B cell (primary cell): ENCODE measurements at regions of chr6 and their contacts with region 1.

Region 1: DNA sequence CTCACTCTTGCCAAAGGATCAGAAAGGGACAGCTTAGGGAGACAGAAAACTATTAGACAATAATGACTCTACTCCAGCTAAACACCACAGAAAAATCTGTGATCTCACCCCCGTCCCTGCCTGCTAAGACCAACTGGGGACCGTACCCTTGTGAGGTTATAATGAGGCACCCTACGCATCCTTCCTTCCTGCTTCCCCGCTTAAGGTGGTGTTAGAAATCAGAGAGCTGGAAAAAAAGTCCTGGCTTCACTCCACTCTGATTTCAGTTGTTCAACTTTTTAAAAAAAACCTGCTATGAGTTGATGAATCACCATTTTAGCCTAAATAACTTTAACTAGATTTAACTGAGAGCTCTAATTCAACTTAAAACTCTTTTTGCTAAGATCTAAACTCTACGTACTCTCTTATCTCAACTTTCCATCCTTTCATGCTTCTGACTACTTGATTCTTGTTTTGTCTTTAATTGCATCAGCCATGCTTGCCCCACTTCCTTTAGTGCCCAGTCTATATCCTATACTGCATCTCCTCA is 35.8 kb upstream of the TMEM14A start:
- DNase-seq: no peak
- ATAC-seq: no peak
- H3K4me3 ChIP-seq: no peak overlapping the region
- H3K4me3 Mint-ChIP-seq: no peak overlapping the region
- H3K27ac ChIP-seq: no peak overlapping the region
- H3K27ac Mint-ChIP-seq: no peak overlapping the region
- H3K4me1 ChIP-seq: no peaks in the 10 kb centered on the region
- H3K4me1 Mint-ChIP-seq: no peaks in the 10 kb centered on the region
- H3K27me3 ChIP-seq: peaks cover 0 to 6% (median 0%) of the 10 kb centered on the region in 4 experiments
- H3K27me3 Mint-ChIP-seq: peaks cover 25% of the 10 kb centered on the region
- CTCF ChIP-seq: no peak

Region 2: DNA sequence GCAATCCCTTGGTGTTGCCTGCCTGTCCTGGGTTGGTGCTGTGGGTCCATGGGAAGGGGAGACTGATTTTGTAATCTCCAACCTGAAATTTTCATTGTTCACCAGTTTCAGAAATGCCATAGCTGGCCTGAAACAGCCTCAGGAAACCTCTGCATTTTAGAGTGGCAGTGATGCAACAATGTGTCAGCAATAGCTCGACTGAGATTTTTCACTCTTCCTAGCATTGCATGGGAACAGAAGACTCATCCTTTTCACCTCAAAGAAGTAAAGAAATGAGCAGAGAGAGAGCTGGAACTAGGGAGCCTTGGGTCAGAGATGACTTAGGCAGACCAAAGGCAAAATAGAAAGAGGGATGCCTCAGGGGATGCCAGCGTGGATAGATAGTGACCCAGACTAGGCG is 12.1 kb after region 1 on chr6:
- CTCF ChIA-PET with region 1: interaction called, 19 read pairs
- POLR2A ChIA-PET with region 1: no interaction called
- intact Hi-C with region 1: no loop called
- DNase-seq: no peak
- ATAC-seq: no peak
- H3K4me3 ChIP-seq: no peak overlapping the region
- H3K4me3 Mint-ChIP-seq: no peak overlapping the region
- H3K27ac ChIP-seq: no peak overlapping the region
- H3K27ac Mint-ChIP-seq: no peak overlapping the region
- H3K4me1 ChIP-seq: no peaks in the 10 kb centered on the region
- H3K4me1 Mint-ChIP-seq: peaks cover 4% of the 10 kb centered on the region
- H3K27me3 ChIP-seq: no peaks in the 10 kb centered on the region
- H3K27me3 Mint-ChIP-seq: peaks cover 13% of the 10 kb centered on the region
- CTCF ChIP-seq: no peak